ENCODE measurements at regions of chr11 and their contacts with region 1.

Region 1: DNA sequence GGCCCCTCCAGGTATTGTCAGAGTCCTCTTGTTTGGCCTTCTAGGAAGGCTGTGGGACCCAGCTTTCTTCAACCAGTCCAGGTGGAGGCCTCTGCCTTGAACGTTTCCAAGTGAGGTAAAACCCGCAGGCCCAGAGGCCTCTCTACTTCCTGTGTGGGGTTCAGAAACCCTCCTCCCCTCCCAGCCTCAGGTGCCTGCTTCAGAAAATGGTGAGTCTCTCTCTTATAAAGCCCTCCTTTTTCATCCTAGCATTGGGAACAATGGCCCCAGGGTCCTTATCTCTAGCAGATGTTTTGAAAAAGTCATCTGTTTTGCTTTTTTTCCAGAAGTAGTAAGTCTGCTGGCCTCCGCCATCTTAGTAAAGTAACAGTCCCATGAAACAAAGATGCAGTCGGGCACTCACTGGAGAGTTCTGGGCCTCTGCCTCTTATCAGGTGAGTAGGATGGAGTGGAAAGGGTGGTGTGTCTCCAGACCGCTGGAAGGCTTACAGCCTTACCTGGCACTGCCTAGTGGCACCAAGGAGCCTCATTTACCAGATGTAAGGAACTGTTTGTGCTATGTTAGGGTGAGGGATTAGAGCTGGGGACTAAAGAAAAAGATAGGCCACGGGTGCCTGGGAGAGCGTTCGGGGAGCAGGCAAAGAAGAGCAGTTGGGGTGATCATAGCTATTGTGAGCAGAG is at the start of gene CD3E:
- DNase-seq: peak; percentile 80
- H3K4me3 Mint-ChIP-seq: peak within 1 kb of the TSS; percentile 99
- H3K27ac Mint-ChIP-seq: peak within 1 kb of the TSS; percentile 99
- H3K4me1 Mint-ChIP-seq: peaks cover 56% of the 10 kb centered on the region
- H3K27me3 Mint-ChIP-seq: no peaks in the 10 kb centered on the region
- total RNA-seq, gene CD3E: 639 to 653 TPM

Region 2: DNA sequence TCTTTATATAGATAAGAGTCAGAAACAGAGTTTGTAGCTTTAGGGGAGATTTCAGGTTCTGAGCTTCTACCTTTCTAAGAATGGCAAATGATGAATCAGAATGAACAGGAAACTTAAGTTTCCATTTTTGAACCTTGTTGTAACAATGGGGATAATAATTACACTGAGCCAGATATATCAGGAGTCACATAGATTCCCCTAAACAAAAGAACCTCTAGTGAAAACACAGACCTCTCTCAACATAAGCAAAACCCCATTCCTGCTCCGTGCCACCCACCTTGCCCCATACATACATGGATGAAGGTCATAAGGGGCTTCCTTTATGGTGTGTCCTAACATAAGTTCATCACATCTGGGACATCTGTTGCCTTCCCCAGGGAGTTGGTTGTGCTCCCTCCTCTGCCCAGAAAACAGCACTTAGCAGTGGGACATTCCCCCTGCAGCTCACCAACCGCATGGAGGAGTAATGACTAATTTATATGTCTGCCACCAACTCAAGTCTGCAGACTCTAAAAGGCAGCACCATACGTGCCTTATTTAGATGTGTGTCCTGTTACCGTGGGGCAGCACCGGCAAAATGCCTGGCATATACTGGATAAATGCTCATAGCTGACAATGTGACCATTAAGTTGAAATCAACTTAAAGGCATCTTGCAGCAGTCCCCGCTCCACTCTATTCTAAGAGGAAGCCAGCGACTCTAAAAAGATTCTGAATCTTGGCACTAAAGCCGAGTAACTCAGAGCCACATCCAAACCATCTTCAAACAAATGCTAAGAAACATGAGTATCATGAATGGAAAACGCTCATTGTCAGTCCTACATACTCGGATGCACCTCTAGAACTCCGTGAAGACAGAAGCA is 87.9 kb before region 1 on chr11:
- CTCF ChIA-PET with region 1: interaction called, 3 read pairs
- POLR2A ChIA-PET with region 1: interaction called, 22 read pairs
- DNase-seq: peak; percentile 57
- H3K4me3 Mint-ChIP-seq: peak overlapping the region; percentile 74
- H3K27ac Mint-ChIP-seq: peak overlapping the region; percentile 94
- H3K4me1 Mint-ChIP-seq: peaks cover 96% of the 10 kb centered on the region
- H3K27me3 Mint-ChIP-seq: no peaks in the 10 kb centered on the region

Region 3: GRCh38 chr11:118251858-118252652 is 52.7 kb before region 1 on chr11 and contains the start of gene MPZL3:
- CTCF ChIA-PET with region 1: no interaction called
- POLR2A ChIA-PET with region 1: interaction called, 15 read pairs
- DNase-seq: peak; percentile 82
- H3K4me3 Mint-ChIP-seq: peak within 1 kb of the TSS; percentile 93
- H3K27ac Mint-ChIP-seq: peak within 1 kb of the TSS; percentile 93
- H3K4me1 Mint-ChIP-seq: peaks cover 44% of the 10 kb centered on the region
- H3K27me3 Mint-ChIP-seq: no peaks in the 10 kb centered on the region
- total RNA-seq, gene MPZL3: 34.0 to 34.9 TPM

Region 4: DNA sequence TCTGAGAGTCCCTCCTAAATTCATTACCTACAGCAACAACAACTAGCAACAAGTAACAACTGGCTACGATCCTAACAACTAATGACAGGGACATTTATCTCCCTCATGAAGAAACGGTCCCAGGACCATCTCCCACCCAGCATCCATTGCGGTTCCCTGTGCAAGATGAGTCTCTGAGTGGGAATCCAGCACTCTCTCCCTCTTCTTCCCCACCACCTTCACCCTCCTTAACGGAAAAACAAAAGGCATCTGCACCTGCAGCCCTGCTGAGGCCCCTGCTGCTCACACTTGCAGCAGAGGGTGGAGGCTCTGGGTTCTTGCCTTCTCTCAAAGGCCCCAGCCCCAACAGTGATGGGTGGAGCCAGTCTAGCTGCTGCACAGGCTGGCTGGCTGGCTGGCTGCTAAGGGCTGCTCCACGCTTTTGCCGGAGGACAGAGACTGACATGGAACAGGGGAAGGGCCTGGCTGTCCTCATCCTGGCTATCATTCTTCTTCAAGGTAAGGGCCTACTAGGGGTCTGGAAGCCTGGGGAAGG is 39.3 kb after region 1 on chr11 and contains the start of gene CD3G:
- CTCF ChIA-PET with region 1: interaction called, 18 read pairs
- POLR2A ChIA-PET with region 1: no interaction called
- DNase-seq: peak; percentile 80
- H3K4me3 Mint-ChIP-seq: peak within 1 kb of the TSS; percentile 89
- H3K27ac Mint-ChIP-seq: peak within 1 kb of the TSS; percentile 99
- H3K4me1 Mint-ChIP-seq: peaks cover 66% of the 10 kb centered on the region
- H3K27me3 Mint-ChIP-seq: no peaks in the 10 kb centered on the region
- total RNA-seq, gene CD3G: 223 to 225 TPM

Region 5: GRCh38 chr11:118353084-118353710 is 48.5 kb after region 1 on chr11:
- CTCF ChIA-PET with region 1: interaction called, 13 read pairs
- POLR2A ChIA-PET with region 1: interaction called, 8 read pairs
- DNase-seq: no peak
- H3K4me3 Mint-ChIP-seq: no peak overlapping the region
- H3K27ac Mint-ChIP-seq: peak overlapping the region; percentile 51
- H3K4me1 Mint-ChIP-seq: peaks cover 20% of the 10 kb centered on the region
- H3K27me3 Mint-ChIP-seq: no peaks in the 10 kb centered on the region

Region 6: DNA sequence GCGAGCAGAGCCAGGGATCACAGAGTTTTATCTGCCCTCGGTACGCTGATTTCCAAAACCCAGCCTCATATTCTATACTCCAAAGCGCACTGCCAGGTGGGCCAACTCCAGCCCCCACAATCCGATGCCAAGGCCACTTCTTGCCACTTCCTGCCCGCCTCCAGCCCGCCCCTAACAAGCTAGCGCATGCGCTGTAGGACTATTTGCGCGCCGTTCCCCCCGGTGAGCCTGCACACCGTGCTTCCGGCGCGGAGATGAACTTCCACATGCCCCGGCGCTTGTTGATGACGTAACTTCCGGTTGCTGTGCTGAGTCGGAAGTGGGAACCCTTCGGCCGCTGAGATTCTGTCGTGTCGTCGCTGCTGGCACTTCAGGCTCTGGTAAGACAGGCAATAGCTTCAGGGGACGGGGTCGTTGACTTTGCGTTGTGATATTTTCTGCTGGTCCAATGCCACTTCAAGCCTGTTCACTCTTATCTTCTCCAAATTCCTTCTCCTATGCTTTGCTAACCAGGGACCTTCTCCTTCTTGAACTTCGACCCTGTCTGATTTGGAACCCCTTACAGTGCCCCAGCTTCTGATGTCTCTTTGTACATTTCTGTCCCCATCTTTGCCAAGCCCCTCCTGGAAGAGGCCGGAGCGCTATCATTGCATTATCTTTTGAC is 54.7 kb after region 1 on chr11 and contains the start of gene UBE4A:
- CTCF ChIA-PET with region 1: interaction called, 13 read pairs
- POLR2A ChIA-PET with region 1: interaction called, 32 read pairs
- DNase-seq: peak; percentile 98
- H3K4me3 Mint-ChIP-seq: peak within 1 kb of the TSS; percentile 92
- H3K27ac Mint-ChIP-seq: peak within 1 kb of the TSS; percentile 83
- H3K4me1 Mint-ChIP-seq: peaks cover 45% of the 10 kb centered on the region
- H3K27me3 Mint-ChIP-seq: no peaks in the 10 kb centered on the region
- total RNA-seq, gene UBE4A: 42.1 to 44.1 TPM

Region 7: GRCh38 chr11:118401151-118401878 is 96.6 kb after region 1 on chr11 and contains the start of gene ATP5MG:
- CTCF ChIA-PET with region 1: no interaction called
- POLR2A ChIA-PET with region 1: interaction called, 17 read pairs
- DNase-seq: peak; percentile 92
- H3K4me3 Mint-ChIP-seq: peak within 1 kb of the TSS; percentile 85
- H3K27ac Mint-ChIP-seq: peak within 1 kb of the TSS; percentile 97
- H3K4me1 Mint-ChIP-seq: peaks cover 74% of the 10 kb centered on the region
- H3K27me3 Mint-ChIP-seq: no peaks in the 10 kb centered on the region
- total RNA-seq, gene ATP5MG: 251 to 260 TPM